ENCODE measurements at regions of chr5 and their contacts with region 1.

Region 1: GRCh38 chr5:173887610-173888472 is at the start of gene CPEB4:
- DNase-seq: peak; percentile 99
- ATAC-seq: peak; percentile 89
- H3K4me3 ChIP-seq: peak within 1 kb of the TSS; percentile 75 to 96 (median 88)
- H3K4me3 Mint-ChIP-seq: peak within 1 kb of the TSS; percentile 95
- H3K27ac ChIP-seq: peak within 1 kb of the TSS; percentile 84 to 92
- H3K27ac Mint-ChIP-seq: peak within 1 kb of the TSS; percentile 99
- H3K4me1 ChIP-seq: peaks cover 62 to 66% of the 10 kb centered on the region in 2 donors
- H3K4me1 Mint-ChIP-seq: peaks cover 87% of the 10 kb centered on the region
- H3K27me3 ChIP-seq: no peaks in the 10 kb centered on the region
- H3K27me3 Mint-ChIP-seq: no peaks in the 10 kb centered on the region
- CTCF ChIP-seq: no peak
- total RNA-seq, gene CPEB4: 26.0 and 28.2 TPM in 2 replicates

Region 2: GRCh38 chr5:173689737-173690360 is 198.0 kb before region 1 on chr5:
- CTCF ChIA-PET with region 1: interaction called, 5 read pairs
- POLR2A ChIA-PET with region 1: interaction called, 3 read pairs
- intact Hi-C with region 1: loop called (anchors 5 kb)
- DNase-seq: peak; percentile 63
- ATAC-seq: peak; percentile 80
- H3K4me3 ChIP-seq: no peak overlapping the region
- H3K4me3 Mint-ChIP-seq: peak overlapping the region; percentile 81
- H3K27ac ChIP-seq: peak overlapping the region; percentile 60 to 64
- H3K27ac Mint-ChIP-seq: peak overlapping the region; percentile 93
- H3K4me1 ChIP-seq: peaks cover 30 to 43% of the 10 kb centered on the region in 2 donors
- H3K4me1 Mint-ChIP-seq: peaks cover 44% of the 10 kb centered on the region
- H3K27me3 ChIP-seq: no peaks in the 10 kb centered on the region
- H3K27me3 Mint-ChIP-seq: no peaks in the 10 kb centered on the region
- CTCF ChIP-seq: peak; percentile 39

Region 3: GRCh38 chr5:173781814-173782670 is 105.8 kb before region 1 on chr5:
- CTCF ChIA-PET with region 1: interaction called, 25 read pairs
- POLR2A ChIA-PET with region 1: interaction called, 5 read pairs
- intact Hi-C with region 1: loop called (anchors 2 kb)
- DNase-seq: peak; percentile 89
- ATAC-seq: peak; percentile 79
- H3K4me3 ChIP-seq: peak overlapping the region in 1 of 5 experiments; percentile 15
- H3K4me3 Mint-ChIP-seq: peak overlapping the region; percentile 69
- H3K27ac ChIP-seq: peak overlapping the region; percentile 56 to 68
- H3K27ac Mint-ChIP-seq: peak overlapping the region; percentile 90
- H3K4me1 ChIP-seq: peaks cover 47 to 59% of the 10 kb centered on the region in 2 donors
- H3K4me1 Mint-ChIP-seq: peaks cover 63% of the 10 kb centered on the region
- H3K27me3 ChIP-seq: no peaks in the 10 kb centered on the region
- H3K27me3 Mint-ChIP-seq: no peaks in the 10 kb centered on the region
- CTCF ChIP-seq: no peak

Region 4: GRCh38 chr5:173833196-173833985 is 54.5 kb before region 1 on chr5:
- CTCF ChIA-PET with region 1: interaction called, 14 read pairs
- POLR2A ChIA-PET with region 1: no interaction called
- intact Hi-C with region 1: loop called (anchors 2 kb)
- DNase-seq: no peak
- ATAC-seq: no peak
- H3K4me3 ChIP-seq: no peak overlapping the region
- H3K4me3 Mint-ChIP-seq: peak overlapping the region; percentile 76
- H3K27ac ChIP-seq: no peak overlapping the region
- H3K27ac Mint-ChIP-seq: no peak overlapping the region
- H3K4me1 ChIP-seq: peaks cover 49 to 58% of the 10 kb centered on the region in 2 donors
- H3K4me1 Mint-ChIP-seq: peaks cover 64% of the 10 kb centered on the region
- H3K27me3 ChIP-seq: no peaks in the 10 kb centered on the region
- H3K27me3 Mint-ChIP-seq: no peaks in the 10 kb centered on the region
- CTCF ChIP-seq: no peak

Region 5: DNA sequence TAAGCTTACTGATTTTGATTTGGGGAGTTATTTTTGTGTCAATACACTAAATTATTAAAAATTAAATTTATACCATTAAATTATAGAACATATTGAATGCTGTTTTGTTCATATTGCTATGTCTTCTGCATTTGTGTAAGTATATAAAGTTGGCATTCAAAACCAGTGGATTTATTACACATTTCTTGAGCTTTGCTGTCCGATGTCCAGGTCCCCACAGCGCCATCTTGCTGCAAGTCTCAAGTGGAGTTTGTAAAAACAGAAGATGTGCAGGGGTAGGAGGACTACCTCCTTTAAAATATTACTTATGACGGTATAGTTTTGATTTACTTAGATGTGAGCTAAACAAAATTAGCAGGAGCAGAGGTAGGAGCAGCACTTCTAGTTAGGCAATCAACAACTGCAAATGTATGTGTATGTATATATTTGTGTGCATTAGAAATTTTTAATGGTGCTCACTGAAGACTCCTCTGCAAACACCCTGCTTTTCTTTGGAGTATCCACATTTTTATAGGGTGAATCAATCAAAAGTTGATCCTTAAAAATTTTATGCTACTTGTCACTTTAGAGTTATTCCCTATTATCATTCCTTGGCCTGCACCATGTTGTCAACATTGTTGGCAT is 37.7 kb after region 1 on chr5:
- CTCF ChIA-PET with region 1: interaction called, 16 read pairs
- POLR2A ChIA-PET with region 1: no interaction called
- intact Hi-C with region 1: no loop called
- DNase-seq: peak; percentile 68
- ATAC-seq: no peak
- H3K4me3 ChIP-seq: no peak overlapping the region
- H3K4me3 Mint-ChIP-seq: no peak overlapping the region
- H3K27ac ChIP-seq: no peak overlapping the region
- H3K27ac Mint-ChIP-seq: no peak overlapping the region
- H3K4me1 ChIP-seq: peaks cover 6 to 8% of the 10 kb centered on the region in 2 donors
- H3K4me1 Mint-ChIP-seq: peaks cover 27% of the 10 kb centered on the region
- H3K27me3 ChIP-seq: no peaks in the 10 kb centered on the region
- H3K27me3 Mint-ChIP-seq: no peaks in the 10 kb centered on the region
- CTCF ChIP-seq: peak; percentile 74

Region 6: DNA sequence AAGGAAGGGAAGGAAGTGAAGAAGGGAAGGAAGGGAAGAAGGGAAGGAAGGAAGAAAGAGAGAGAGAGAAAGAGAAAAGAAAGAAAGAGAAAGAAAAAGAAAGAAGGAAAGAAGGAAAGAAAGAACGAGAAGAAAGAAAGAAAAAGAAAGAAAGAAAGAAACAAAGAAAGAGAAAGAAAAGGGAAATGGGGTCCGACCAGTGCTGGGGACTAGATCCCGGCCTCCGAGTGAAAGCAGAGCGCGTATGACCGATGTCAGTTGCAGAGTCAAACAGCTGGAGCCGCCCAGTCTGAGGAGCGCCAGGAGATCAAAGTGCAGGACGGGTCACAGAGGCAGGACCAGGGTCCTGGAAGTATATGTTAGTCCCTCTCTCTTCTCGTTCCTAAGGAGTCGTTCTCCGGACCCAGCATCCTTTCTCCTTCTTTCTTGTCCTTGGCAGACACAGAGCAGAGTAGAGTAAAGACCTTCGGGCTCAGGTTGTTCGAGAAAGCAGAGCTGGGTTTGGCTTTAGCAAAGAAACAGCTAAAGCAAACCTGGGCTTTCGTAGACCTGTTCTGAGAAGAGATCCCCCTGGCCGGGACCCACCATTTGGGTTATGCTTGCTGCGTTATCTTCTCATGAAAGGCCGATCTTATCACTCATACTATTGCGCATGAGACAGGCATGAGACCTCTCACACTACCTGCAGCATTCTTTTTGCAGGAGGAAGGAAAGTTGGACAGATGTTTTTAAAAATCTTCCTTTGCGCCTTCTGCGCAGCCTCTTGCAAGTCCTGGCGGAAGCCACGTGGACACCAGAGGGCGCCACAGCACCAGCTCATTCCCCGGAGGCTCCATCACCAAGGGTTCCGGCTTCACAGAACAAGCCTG is 531.3 kb after region 1 on chr5:
- CTCF ChIA-PET with region 1: no interaction called
- POLR2A ChIA-PET with region 1: no interaction called
- intact Hi-C with region 1: no loop called
- DNase-seq: peak; percentile 37
- ATAC-seq: no peak
- H3K4me3 ChIP-seq: no peak overlapping the region
- H3K4me3 Mint-ChIP-seq: no peak overlapping the region
- H3K27ac ChIP-seq: no peak overlapping the region
- H3K27ac Mint-ChIP-seq: no peak overlapping the region
- H3K4me1 ChIP-seq: peaks cover 3 to 4% of the 10 kb centered on the region in 2 donors
- H3K4me1 Mint-ChIP-seq: peaks cover 8% of the 10 kb centered on the region
- H3K27me3 ChIP-seq: peaks cover 0 to 5% (median 0%) of the 10 kb centered on the region in 4 experiments
- H3K27me3 Mint-ChIP-seq: peaks cover 23% of the 10 kb centered on the region
- CTCF ChIP-seq: peak; percentile 55